Activated CD4-positive, alpha-beta memory T cell treated with anti-CD3 and anti-CD28 coated beads, Interleukin-2, amount 10 ng/mL, durations not matched to agents 7 days and 5 days (primary cell): ENCODE measurements at regions of chr19 and their contacts with region 1.

Region 1: DNA sequence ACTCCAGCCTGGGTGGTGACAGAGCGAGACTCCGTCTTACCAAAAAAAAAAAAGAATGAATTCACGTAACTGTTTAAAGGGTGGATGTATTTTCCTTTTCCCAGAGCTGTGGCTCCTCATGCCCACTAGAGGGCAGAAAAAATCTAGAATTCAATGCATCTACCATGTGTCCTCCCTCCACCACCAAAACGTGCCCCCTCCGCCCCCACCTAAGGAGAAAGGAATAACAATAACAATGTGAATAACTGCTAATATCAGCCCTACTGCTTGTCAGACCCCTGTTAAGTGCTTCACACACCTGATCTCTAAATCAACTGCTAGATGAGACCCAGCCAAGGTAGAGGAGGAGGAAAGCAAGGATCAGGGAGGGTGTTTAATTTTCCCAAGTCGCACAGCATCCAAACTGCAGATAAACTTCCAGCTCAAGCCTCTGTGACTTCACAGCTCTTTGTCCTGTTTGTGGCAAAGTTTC is 20.2 kb upstream of the PNMA8B start:
- DNase-seq: peak; percentile 33
- H3K4me3 Mint-ChIP-seq: no peak overlapping the region
- H3K27ac Mint-ChIP-seq: no peak overlapping the region
- H3K4me1 Mint-ChIP-seq: peaks cover 25% of the 10 kb centered on the region
- H3K27me3 Mint-ChIP-seq: peaks cover 23% of the 10 kb centered on the region

Region 2: GRCh38 chr19:46529622-46530462 is 13.9 kb after region 1 on chr19:
- CTCF ChIA-PET with region 1: interaction called, 39 read pairs
- POLR2A ChIA-PET with region 1: interaction called, 3 read pairs
- DNase-seq: peak; percentile 75
- H3K4me3 Mint-ChIP-seq: no peak overlapping the region
- H3K27ac Mint-ChIP-seq: peak overlapping the region; percentile 8
- H3K4me1 Mint-ChIP-seq: peaks cover 17% of the 10 kb centered on the region
- H3K27me3 Mint-ChIP-seq: no peaks in the 10 kb centered on the region